ENCODE measurements at regions of chr19 and their contacts with region 1.

Region 1: DNA sequence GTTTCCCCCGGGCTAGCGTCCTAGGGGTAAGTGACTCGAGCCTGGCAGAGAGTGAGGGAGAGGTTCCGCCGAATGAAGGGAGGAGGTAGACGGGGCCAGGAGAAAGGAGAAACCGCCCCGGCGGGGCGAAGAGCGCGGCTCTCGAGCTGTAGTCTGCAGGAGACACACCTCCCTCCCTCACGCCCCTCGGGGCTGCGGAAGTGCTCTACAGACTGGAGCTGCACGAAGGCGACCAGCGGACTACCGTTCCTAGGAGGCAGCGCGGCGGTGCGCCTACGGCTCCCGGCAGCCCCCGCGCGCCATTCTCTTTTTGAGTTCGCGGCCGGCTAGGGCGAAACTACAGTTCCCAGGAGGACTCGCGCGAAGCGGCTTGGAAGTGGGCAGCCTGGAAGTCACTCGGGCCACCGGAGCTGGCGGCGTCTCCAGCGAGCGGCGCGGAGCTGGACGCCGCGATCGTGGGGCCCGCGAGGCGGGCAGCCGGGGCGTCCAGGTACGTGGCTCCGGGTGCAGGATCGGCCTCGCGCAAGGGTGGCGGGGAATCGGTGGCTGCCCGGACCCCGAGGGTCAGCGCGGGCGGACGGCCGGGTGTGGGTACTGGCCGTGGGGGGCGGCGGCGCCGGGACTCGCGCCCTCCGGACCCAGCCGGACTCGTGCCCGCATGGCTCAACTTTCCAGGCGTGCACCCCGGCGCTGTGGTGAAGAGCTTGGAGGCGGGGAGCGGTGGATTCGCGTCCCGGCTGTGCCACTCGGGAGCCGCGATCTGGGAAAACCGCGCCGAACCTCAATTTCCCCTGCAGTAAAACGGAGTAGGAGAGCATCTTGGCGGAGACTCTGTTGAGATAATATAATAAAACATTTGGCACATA is at the start of gene SIPA1L3:
- DNase-seq: peak; percentile 95
- H3K4me3 Mint-ChIP-seq: peak within 1 kb of the TSS; percentile 87
- H3K27ac Mint-ChIP-seq: peak within 1 kb of the TSS; percentile 72
- H3K4me1 Mint-ChIP-seq: peaks cover 16% of the 10 kb centered on the region
- H3K27me3 Mint-ChIP-seq: no peaks in the 10 kb centered on the region
- total RNA-seq, gene SIPA1L3: 13.6 to 15.2 TPM

Region 2: DNA sequence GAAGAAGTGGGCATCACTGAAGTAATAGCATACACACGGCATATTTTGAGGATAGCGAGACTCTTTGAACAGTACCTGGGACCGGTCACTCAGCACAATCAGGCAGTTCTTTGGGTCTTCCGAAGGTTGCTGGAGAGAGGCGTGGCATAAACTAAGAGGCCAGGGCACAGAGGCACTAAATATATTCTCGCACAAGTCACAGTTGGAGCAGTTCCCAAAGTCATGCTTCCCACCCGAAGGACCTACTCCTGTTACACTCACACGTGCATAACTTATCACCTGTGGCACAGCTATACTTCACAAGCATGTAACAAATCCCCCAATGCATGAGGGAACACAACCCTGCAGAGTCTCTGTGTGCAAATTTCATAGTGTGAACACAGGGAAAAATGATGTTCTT is 10.9 kb before region 1 on chr19:
- CTCF ChIA-PET with region 1: interaction called, 23 read pairs
- POLR2A ChIA-PET with region 1: interaction called, 3 read pairs
- DNase-seq: no peak
- H3K4me3 Mint-ChIP-seq: no peak overlapping the region
- H3K27ac Mint-ChIP-seq: no peak overlapping the region
- H3K4me1 Mint-ChIP-seq: peaks cover 7% of the 10 kb centered on the region
- H3K27me3 Mint-ChIP-seq: no peaks in the 10 kb centered on the region

Region 3: GRCh38 chr19:38013913-38014575 is 106.9 kb after region 1 on chr19:
- CTCF ChIA-PET with region 1: no interaction called
- POLR2A ChIA-PET with region 1: no interaction called
- DNase-seq: no peak
- H3K4me3 Mint-ChIP-seq: no peak overlapping the region
- H3K27ac Mint-ChIP-seq: no peak overlapping the region
- H3K4me1 Mint-ChIP-seq: no peaks in the 10 kb centered on the region
- H3K27me3 Mint-ChIP-seq: no peaks in the 10 kb centered on the region

Region 4: DNA sequence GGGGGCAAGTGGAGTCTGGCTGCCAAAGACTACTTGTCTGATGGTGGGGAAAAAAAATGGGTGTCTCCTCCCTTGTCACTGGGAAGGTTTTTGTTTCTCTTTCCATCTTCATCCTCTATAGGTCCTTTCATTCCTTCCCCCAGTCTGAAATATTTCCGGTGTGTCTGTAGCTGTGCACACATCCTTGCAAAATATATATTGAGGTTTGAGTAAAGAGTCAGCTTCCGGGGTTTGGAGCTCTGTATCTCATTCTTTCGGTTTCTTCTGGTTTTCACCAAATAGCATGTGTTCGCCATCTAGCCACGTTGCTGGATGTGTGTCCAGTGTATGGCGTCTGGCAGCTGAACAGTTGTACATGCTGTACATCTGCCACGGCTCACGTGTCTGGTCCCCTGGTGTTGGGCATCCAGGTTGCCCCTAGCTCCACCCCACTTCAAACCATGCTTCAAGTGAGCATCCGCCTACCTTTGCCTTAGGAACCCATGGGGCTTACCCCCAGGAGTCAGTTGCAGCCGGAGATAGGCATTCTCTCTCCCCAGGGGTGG is 142.1 kb after region 1 on chr19:
- CTCF ChIA-PET with region 1: interaction called, 10 read pairs
- POLR2A ChIA-PET with region 1: interaction called, 5 read pairs
- DNase-seq: peak; percentile 64
- H3K4me3 Mint-ChIP-seq: peak overlapping the region; percentile 66
- H3K27ac Mint-ChIP-seq: peak overlapping the region; percentile 95
- H3K4me1 Mint-ChIP-seq: peaks cover 35% of the 10 kb centered on the region
- H3K27me3 Mint-ChIP-seq: no peaks in the 10 kb centered on the region

Region 5: GRCh38 chr19:38224014-38224862 is 317.1 kb after region 1 on chr19 and contains the start of gene DPF1:
- CTCF ChIA-PET with region 1: interaction called, 13 read pairs
- POLR2A ChIA-PET with region 1: no interaction called
- DNase-seq: peak; percentile 52
- H3K4me3 Mint-ChIP-seq: peak within 1 kb of the TSS; percentile 64
- H3K27ac Mint-ChIP-seq: no peak within 1 kb of the TSS
- H3K4me1 Mint-ChIP-seq: peaks cover 19% of the 10 kb centered on the region
- H3K27me3 Mint-ChIP-seq: peaks cover 60% of the 10 kb centered on the region
- total RNA-seq, gene DPF1: 0.40 to 0.55 TPM

Measured in activated CD4-positive, alpha-beta memory T cell treated with anti-CD3 and anti-CD28 coated beads, Interleukin-2, amount 10 ng/mL, durations not matched to agents 7 days and 5 days (primary cell).